Vagina (tissue), 2 donors: ENCODE measurements at regions of chr4 and their contacts with region 1.

Region 1: GRCh38 chr4:38663801-38664705 is at the start of gene KLF3:
- DNase-seq: peak in 1 of 2 donors; percentile 97
- H3K4me3 ChIP-seq: peak within 1 kb of the TSS; percentile 88 to 90
- H3K27ac ChIP-seq: peak within 1 kb of the TSS; percentile 98
- H3K4me1 ChIP-seq: peaks cover 44% of the 10 kb centered on the region
- H3K27me3 ChIP-seq: no peaks in the 10 kb centered on the region
- CTCF ChIP-seq: no peak
- POLR2A ChIP-seq: peak in 1 of 2 donors; percentile 85
- total RNA-seq, gene KLF3: 85.4 TPM

Region 2: DNA sequence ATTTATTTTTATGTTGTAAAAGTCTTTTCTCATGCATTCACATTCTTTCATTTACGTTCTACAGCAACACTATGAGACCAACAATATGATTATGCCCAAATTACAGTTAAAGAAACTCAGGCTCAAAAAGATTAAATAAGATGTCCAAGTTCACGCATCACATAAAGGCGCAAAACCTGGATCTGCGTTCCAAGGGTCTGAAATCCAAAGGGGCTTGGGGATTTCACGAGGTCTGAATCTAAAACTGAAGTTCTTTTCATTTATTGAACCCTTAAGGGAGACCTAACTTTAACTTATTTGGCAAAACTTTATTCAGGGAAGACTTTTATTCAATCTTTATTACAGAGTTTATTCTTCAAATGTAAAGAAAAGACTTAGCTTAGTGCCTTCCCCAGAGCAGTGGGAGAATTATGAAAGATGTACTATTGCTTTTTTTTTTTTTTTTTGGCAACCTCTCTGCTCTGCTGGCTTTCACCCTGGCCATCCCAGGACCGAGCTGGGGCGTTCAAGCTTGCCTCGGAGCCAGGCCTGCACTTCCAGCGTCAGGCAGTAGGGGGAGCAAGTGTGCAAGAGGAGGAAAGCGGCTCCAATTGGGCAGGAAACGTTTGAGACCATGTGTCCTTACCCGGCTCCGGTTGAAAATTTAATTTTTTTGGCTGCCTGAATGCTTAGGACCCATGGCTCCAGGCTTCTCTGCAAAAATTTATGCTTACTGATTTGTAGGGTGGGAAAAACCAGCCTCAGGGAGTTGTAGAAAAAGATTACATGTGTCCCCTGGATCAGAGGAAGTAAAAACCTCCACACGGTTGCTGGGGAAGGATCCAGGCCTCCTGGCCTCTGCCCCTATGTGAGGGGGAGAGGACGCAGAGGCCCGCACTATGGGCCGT is 344.4 kb before region 1 on chr4:
- intact Hi-C with region 1: loop called (anchors 5 kb)
- DNase-seq: peak in 1 of 2 donors; percentile 97
- H3K4me3 ChIP-seq: peak overlapping the region; percentile 16 to 40
- H3K27ac ChIP-seq: peak overlapping the region; percentile 88
- H3K4me1 ChIP-seq: peaks cover 36% of the 10 kb centered on the region
- H3K27me3 ChIP-seq: no peaks in the 10 kb centered on the region
- CTCF ChIP-seq: peak; percentile 77 to 94 (median 82)
- POLR2A ChIP-seq: no peak

Region 3: GRCh38 chr4:38387348-38387747 is 276.7 kb before region 1 on chr4:
- intact Hi-C with region 1: loop called (anchors 10 kb)
- DNase-seq: no peak
- H3K4me3 ChIP-seq: no peak overlapping the region
- H3K27ac ChIP-seq: peak overlapping the region; percentile 18
- H3K4me1 ChIP-seq: peaks cover 38% of the 10 kb centered on the region
- H3K27me3 ChIP-seq: no peaks in the 10 kb centered on the region
- CTCF ChIP-seq: no peak
- POLR2A ChIP-seq: no peak

Region 4: DNA sequence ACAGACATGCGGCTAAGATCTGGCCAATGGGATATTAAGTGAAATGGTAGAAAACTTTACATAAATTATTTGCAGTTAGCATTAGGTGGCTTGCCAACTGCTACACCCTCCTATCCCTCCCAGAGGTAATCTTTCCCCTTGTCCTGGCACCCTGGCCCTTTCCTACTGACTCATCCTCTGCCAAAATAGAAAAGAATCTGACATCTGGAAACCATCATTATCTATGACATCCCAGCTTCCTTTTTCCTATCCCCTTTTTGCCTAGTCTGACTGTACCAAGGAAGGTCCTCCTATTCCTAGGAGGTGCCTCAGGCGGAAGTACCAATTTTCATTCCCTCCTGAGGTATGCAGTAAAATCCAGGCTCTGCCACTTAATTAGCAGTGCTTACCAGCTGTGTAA is 163.6 kb before region 1 on chr4:
- intact Hi-C with region 1: no loop called
- DNase-seq: no peak
- H3K4me3 ChIP-seq: no peak overlapping the region
- H3K27ac ChIP-seq: no peak overlapping the region
- H3K4me1 ChIP-seq: no peaks in the 10 kb centered on the region
- H3K27me3 ChIP-seq: no peaks in the 10 kb centered on the region
- CTCF ChIP-seq: no peak
- POLR2A ChIP-seq: no peak